RWPE1 (cell line): ENCODE measurements at regions of chr11 and their contacts with region 1.

Region 1: GRCh38 chr11:83219095-83219494 is 25.6 kb downstream of the ANKRD42 start:
- DNase-seq: no peak
- H3K27ac ChIP-seq: no peak overlapping the region
- CTCF ChIP-seq: no peak

Region 2: GRCh38 chr11:83241291-83241946 is 22.3 kb after region 1 on chr11:
- CTCF ChIA-PET with region 1: no interaction called
- POLR2A ChIA-PET with region 1: interaction called, 11 read pairs
- DNase-seq: peak; percentile 60
- H3K27ac ChIP-seq: no peak overlapping the region
- CTCF ChIP-seq: peak; percentile 67

Region 3: GRCh38 chr11:83292709-83293456 is 73.8 kb after region 1 on chr11:
- CTCF ChIA-PET with region 1: no interaction called
- POLR2A ChIA-PET with region 1: no interaction called
- DNase-seq: peak; percentile 66
- H3K27ac ChIP-seq: no peak overlapping the region
- CTCF ChIP-seq: peak; percentile 73

Region 4: GRCh38 chr11:83317757-83318690 is 98.9 kb after region 1 on chr11:
- CTCF ChIA-PET with region 1: no interaction called
- POLR2A ChIA-PET with region 1: no interaction called
- DNase-seq: no peak
- H3K27ac ChIP-seq: no peak overlapping the region
- CTCF ChIP-seq: no peak